B cell (primary cell): ENCODE measurements at regions of chr9 and their contacts with region 1.

Region 1: DNA sequence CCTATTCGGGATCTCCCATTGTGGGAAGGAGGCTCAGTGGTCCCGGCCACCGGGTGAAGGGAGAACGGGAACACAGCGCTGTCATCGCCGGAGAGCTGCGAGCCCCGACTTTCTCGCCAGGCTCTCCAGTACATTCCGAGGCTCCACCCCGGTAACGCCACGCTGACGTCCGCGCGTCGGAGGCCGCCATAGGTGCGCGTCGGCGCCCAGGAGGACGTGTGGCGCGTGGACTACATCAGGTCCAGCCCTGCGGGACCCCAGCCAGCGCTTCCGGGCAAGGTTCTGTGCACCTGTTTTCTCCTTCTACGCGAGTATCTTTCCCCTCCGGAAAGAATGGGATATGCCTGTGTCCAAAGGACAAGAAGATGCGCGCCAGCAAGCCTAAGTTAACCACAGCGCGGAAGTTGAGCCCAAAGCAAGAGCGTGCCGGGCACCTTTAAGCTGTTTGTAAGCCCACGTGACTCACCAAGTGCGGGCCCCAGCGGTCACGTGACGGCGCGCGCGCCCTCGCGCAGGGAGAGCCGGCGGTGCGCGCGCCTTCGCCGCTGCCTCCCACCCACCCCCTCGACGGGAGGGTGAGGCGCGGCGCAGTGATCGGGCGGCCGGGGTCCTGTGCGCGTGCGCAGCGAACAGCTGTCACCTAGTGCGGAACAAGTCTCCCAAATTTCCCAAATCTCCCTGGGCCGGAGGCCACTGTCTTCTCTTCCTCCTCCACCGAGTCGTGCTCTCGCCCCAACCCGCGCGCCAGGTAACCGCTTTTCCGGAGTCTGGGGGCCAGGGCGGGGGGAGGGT is at the start of gene KDM4C:
- DNase-seq: peak; percentile 99
- ATAC-seq: peak; percentile 78
- H3K4me3 ChIP-seq: peak within 1 kb of the TSS; percentile 74 to 98 (median 96)
- H3K4me3 Mint-ChIP-seq: peak within 1 kb of the TSS; percentile 100
- H3K27ac ChIP-seq: peak within 1 kb of the TSS; percentile 94 to 100
- H3K27ac Mint-ChIP-seq: peak within 1 kb of the TSS; percentile 100
- H3K4me1 ChIP-seq: peaks cover 29 to 35% of the 10 kb centered on the region in 2 donors
- H3K4me1 Mint-ChIP-seq: peaks cover 32% of the 10 kb centered on the region
- H3K27me3 ChIP-seq: no peaks in the 10 kb centered on the region
- H3K27me3 Mint-ChIP-seq: no peaks in the 10 kb centered on the region
- CTCF ChIP-seq: no peak
- total RNA-seq, gene KDM4C: 141 and 155 TPM in 2 replicates

Region 2: DNA sequence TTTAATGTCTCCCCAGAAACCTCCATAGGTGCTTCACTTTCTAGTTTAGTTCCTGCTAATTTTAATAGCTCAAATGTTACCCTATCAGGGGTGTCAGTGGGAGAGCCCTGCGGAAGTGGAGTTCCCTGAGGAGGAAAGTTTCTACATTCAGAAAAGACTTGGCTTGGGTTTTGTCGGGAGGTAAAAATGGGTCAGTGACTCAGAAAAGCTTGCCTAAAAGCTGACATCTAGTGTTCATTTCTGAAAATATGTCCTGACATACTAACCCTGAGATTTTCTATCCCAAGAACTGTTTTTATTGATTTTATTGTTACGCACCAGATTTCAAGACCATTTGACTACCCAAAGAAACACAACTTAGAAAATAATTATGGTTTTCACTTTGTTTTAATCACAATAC is 71.3 kb before region 1 on chr9:
- CTCF ChIA-PET with region 1: interaction called, 7 read pairs
- POLR2A ChIA-PET with region 1: interaction called, 116 read pairs
- intact Hi-C with region 1: loop called (anchors 1 kb)
- DNase-seq: no peak
- ATAC-seq: no peak
- H3K4me3 ChIP-seq: no peak overlapping the region
- H3K4me3 Mint-ChIP-seq: no peak overlapping the region
- H3K27ac ChIP-seq: peak overlapping the region; percentile 32 to 53
- H3K27ac Mint-ChIP-seq: peak overlapping the region; percentile 28
- H3K4me1 ChIP-seq: peaks cover 62 to 89% of the 10 kb centered on the region in 2 donors
- H3K4me1 Mint-ChIP-seq: peaks cover 48% of the 10 kb centered on the region
- H3K27me3 ChIP-seq: no peaks in the 10 kb centered on the region
- H3K27me3 Mint-ChIP-seq: no peaks in the 10 kb centered on the region
- CTCF ChIP-seq: peak; percentile 23

Region 3: GRCh38 chr9:6703898-6704639 is 53.6 kb before region 1 on chr9:
- CTCF ChIA-PET with region 1: interaction called, 4 read pairs
- POLR2A ChIA-PET with region 1: interaction called, 26 read pairs
- intact Hi-C with region 1: loop called (anchors 1 kb)
- DNase-seq: peak; percentile 96
- ATAC-seq: peak; percentile 80
- H3K4me3 ChIP-seq: peak overlapping the region; percentile 70 to 98 (median 75)
- H3K4me3 Mint-ChIP-seq: peak overlapping the region; percentile 99
- H3K27ac ChIP-seq: peak overlapping the region; percentile 98 to 100
- H3K27ac Mint-ChIP-seq: peak overlapping the region; percentile 100
- H3K4me1 ChIP-seq: peaks cover 16 to 28% of the 10 kb centered on the region in 2 donors
- H3K4me1 Mint-ChIP-seq: peaks cover 29% of the 10 kb centered on the region
- H3K27me3 ChIP-seq: no peaks in the 10 kb centered on the region
- H3K27me3 Mint-ChIP-seq: no peaks in the 10 kb centered on the region
- CTCF ChIP-seq: no peak

Region 4: GRCh38 chr9:6777213-6777902 is 19.7 kb after region 1 on chr9:
- CTCF ChIA-PET with region 1: no interaction called
- POLR2A ChIA-PET with region 1: interaction called, 11 read pairs
- intact Hi-C with region 1: no loop called
- DNase-seq: peak; percentile 46
- ATAC-seq: peak; percentile 60
- H3K4me3 ChIP-seq: peak overlapping the region in 1 of 5 experiments; percentile 2
- H3K4me3 Mint-ChIP-seq: peak overlapping the region; percentile 61
- H3K27ac ChIP-seq: peak overlapping the region in 1 of 2 donors; percentile 54
- H3K27ac Mint-ChIP-seq: peak overlapping the region; percentile 37
- H3K4me1 ChIP-seq: peaks cover 45 to 47% of the 10 kb centered on the region in 2 donors
- H3K4me1 Mint-ChIP-seq: peaks cover 55% of the 10 kb centered on the region
- H3K27me3 ChIP-seq: no peaks in the 10 kb centered on the region
- H3K27me3 Mint-ChIP-seq: no peaks in the 10 kb centered on the region
- CTCF ChIP-seq: no peak